Breast epithelium (tissue), 4 donors: ENCODE measurements at regions of chr12 and their contacts with region 1.

Region 1: DNA sequence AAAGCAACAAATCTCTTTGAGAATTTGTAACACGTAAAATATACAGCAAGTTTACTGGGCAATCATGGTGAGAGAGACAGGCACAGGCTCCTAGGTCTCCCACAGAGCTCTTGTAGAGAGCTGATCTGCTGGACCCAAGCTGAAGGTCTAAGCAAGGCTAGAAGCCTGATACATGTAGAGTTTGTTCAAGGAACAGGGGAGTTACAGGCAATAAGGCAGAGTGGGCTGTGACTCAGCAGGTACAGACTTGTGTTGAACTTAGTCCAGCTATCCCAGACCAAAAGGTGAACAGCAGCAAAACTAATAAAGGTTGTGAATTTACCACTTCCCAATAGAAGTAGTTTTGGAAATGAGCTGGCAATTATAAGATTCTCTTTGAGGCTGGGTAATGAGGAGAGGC is 273.6 kb downstream of the GRIN2B start:
- DNase-seq: no peak
- H3K4me3 ChIP-seq: no peak overlapping the region
- H3K27ac ChIP-seq: no peak overlapping the region
- H3K4me1 ChIP-seq: no peaks in the 10 kb centered on the region
- H3K27me3 ChIP-seq: no peaks in the 10 kb centered on the region
- CTCF ChIP-seq: no peak
- POLR2A ChIP-seq: no peak

Region 2: DNA sequence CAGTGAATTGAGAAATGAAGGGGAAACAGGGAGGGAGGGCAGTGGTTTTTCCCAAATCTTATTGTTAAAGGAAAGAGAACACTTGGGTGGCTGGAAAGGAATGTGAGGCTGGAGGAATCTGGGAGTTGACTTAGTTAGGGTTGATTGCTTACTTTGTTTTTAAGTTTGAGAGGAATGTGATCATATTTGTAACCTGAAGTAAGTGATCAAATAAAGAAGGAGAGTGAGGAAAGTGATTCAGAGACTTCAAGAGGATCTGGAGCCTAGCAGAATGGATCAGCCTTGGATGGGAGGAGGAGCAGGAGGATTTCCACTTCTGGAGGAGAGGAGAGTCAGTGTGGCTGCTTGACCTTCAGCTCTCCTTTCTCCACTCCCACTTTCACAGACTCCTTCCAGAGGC is 1435.0 kb before region 1 on chr12:
- intact Hi-C with region 1: no loop called
- DNase-seq: no peak
- H3K4me3 ChIP-seq: no peak overlapping the region
- H3K27ac ChIP-seq: peak overlapping the region in 1 of 2 donors; percentile 16
- H3K4me1 ChIP-seq: peaks cover 0 to 1% of the 10 kb centered on the region in 2 donors
- H3K27me3 ChIP-seq: no peaks in the 10 kb centered on the region
- CTCF ChIP-seq: no peak
- POLR2A ChIP-seq: no peak

Region 3: GRCh38 chr12:12786716-12787601 is 920.9 kb before region 1 on chr12:
- intact Hi-C with region 1: loop called (anchors 5 kb)
- DNase-seq: peak; percentile 63 to 75
- H3K4me3 ChIP-seq: peak overlapping the region; percentile 58 to 79 (median 74)
- H3K27ac ChIP-seq: peak overlapping the region; percentile 91 to 94
- H3K4me1 ChIP-seq: peaks cover 0 to 4% of the 10 kb centered on the region in 2 donors
- H3K27me3 ChIP-seq: no peaks in the 10 kb centered on the region
- CTCF ChIP-seq: peak in 2 of 3 donors; percentile 26 to 54
- POLR2A ChIP-seq: no peak

Region 4: GRCh38 chr12:13074396-13075107 is 633.3 kb before region 1 on chr12:
- intact Hi-C with region 1: no loop called
- DNase-seq: no peak
- H3K4me3 ChIP-seq: no peak overlapping the region
- H3K27ac ChIP-seq: no peak overlapping the region
- H3K4me1 ChIP-seq: no peaks in the 10 kb centered on the region
- H3K27me3 ChIP-seq: no peaks in the 10 kb centered on the region
- CTCF ChIP-seq: no peak
- POLR2A ChIP-seq: no peak